ENCODE measurements at regions of chr2 and their contacts with region 1.

Region 1: DNA sequence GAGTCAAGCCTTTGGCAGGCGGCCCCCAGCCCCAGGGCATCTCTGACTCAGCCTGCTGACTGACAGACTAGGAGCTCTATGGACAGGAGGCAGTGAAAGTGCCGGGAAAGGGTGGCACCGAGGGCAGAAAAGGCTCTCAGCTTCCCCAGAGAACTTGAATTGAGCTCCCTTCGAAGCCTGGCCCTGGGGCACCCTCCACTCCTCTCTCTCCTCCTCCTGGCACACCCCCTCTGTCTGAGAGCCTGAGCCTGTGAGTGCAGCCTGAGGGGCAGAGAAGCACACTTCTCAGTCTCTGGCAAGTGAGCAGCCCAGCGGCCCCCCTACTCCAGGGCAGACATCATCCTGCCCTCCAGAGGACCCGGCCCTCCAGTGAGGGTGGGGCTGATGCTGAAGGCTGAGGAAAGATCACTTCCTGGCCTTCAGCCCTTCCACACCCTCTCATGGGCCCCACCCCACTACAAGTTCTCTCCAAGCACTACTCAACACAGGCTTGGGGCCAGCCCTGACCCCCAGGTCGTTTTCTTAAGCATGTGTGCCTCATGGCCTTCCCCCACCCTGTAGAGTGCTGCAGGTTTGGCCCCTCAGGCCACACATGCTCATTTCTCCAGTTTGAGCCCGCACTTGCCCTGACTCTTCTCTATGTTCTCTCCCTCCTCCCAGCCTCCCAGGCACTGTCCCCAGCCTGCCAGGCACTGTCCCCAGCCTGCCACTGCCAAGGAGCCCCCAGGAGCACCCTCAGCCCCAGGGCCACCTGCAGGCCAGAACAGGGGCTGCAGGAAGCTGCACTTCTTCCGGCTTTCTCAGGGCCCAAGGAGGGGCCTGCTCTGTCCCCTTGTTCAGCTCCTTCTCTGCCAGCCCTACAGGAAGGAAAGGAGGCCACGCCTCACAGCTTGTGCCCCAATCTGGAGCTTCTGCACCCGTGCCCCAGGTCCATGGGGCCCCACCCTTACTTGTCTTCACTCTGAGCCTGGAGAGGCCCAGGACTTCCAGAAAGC is 31.8 kb downstream of the CYP26B1 start:
- DNase-seq: peak; percentile 99
- H3K4me3 Mint-ChIP-seq: peak overlapping the region; percentile 62
- H3K27ac Mint-ChIP-seq: peak overlapping the region; percentile 79
- H3K4me1 Mint-ChIP-seq: peaks cover 10% of the 10 kb centered on the region
- H3K27me3 Mint-ChIP-seq: no peaks in the 10 kb centered on the region
- CTCF ChIP-seq: peak; percentile 47

Region 2: GRCh38 chr2:72041638-72042111 is 74.2 kb before region 1 on chr2:
- CTCF ChIA-PET with region 1: no interaction called
- POLR2A ChIA-PET with region 1: interaction called, 10 read pairs
- intact Hi-C with region 1: no loop called
- DNase-seq: peak; percentile 91
- H3K4me3 Mint-ChIP-seq: peak overlapping the region; percentile 2
- H3K27ac Mint-ChIP-seq: peak overlapping the region; percentile 21
- H3K4me1 Mint-ChIP-seq: peaks cover 21% of the 10 kb centered on the region
- H3K27me3 Mint-ChIP-seq: no peaks in the 10 kb centered on the region
- CTCF ChIP-seq: no peak

Region 3: DNA sequence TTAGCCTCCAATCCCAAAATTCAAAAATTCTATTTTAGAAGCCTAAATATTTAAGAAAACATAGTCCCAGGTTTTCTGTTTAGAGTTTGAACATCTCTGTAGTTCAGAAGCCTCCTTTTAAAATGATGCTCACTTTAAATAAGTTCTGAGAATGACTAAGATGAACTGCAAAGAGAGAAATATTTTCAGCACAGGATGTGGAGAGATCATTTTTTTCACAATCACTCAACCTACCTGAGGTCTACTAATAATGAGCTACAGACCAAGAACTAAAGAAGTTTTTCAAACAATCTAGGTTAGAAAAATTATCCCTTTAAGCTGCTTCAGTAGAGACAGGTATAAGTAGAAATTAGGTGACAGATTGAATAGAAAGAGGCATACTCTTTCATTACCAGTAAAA is 216.9 kb after region 1 on chr2:
- CTCF ChIA-PET with region 1: no interaction called
- POLR2A ChIA-PET with region 1: no interaction called
- intact Hi-C with region 1: no loop called
- DNase-seq: no peak
- H3K4me3 Mint-ChIP-seq: no peak overlapping the region
- H3K27ac Mint-ChIP-seq: no peak overlapping the region
- H3K4me1 Mint-ChIP-seq: no peaks in the 10 kb centered on the region
- H3K27me3 Mint-ChIP-seq: no peaks in the 10 kb centered on the region
- CTCF ChIP-seq: no peak